GM10248 (cell line): ENCODE measurements at regions of chr2 and their contacts with region 1.

Region 1: GRCh38 chr2:196068271-196069209 is at the start of gene DNAH7:
- DNase-seq: peak; percentile 91
- CTCF ChIP-seq: peak; percentile 99

Region 2: DNA sequence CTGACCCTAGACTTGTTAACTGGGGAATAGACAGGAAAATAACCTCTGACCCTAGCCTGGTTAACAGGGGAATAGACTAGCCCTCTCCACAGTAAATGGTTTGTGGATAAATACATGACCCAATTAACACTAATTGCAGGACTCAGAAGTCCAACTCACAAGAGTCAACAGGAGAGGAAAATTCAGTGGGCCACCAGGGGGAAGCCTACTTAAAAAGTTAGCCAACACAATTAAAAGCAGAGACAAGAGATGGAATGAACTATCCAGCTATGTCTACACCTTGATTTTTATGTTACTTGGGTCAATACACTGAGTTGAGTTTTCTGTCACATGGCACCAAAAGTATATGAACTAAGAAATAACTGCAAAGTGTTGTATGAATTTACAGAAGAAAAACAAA is 570.4 kb before region 1 on chr2:
- CTCF ChIA-PET with region 1: interaction called, 24 read pairs
- POLR2A ChIA-PET with region 1: no interaction called
- DNase-seq: peak; percentile 26
- CTCF ChIP-seq: peak; percentile 39

Region 3: GRCh38 chr2:195657634-195658540 is 410.7 kb before region 1 on chr2:
- CTCF ChIA-PET with region 1: interaction called, 12 read pairs
- POLR2A ChIA-PET with region 1: no interaction called
- DNase-seq: peak; percentile 34
- CTCF ChIP-seq: no peak

Region 4: GRCh38 chr2:196046123-196046917 is 22.2 kb before region 1 on chr2:
- CTCF ChIA-PET with region 1: interaction called, 50 read pairs
- POLR2A ChIA-PET with region 1: no interaction called
- DNase-seq: no peak
- CTCF ChIP-seq: no peak

Region 5: DNA sequence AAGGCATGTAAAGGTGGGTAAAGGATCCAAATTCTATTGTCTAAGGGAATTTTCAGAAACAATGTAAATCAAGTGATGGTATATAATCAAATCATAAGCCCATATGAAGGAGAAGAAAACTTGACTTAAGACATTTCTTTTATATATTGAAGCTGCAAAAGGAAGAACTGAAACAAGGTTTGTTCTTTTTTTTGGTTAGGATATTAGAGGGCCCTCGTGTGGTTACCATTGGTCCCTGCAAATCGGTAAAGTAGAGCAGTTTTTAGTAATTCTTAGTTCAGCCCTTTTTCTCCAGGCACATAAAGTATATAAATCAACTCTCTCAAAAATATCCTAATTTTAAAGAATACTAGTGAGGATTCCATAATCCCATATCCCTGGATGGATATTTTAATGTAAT is 208.5 kb after region 1 on chr2:
- CTCF ChIA-PET with region 1: interaction called, 10 read pairs
- POLR2A ChIA-PET with region 1: no interaction called
- DNase-seq: peak; percentile 64
- CTCF ChIP-seq: peak; percentile 75